H1 (cell line): ENCODE measurements at regions of chr2 and their contacts with region 1.

Region 1: DNA sequence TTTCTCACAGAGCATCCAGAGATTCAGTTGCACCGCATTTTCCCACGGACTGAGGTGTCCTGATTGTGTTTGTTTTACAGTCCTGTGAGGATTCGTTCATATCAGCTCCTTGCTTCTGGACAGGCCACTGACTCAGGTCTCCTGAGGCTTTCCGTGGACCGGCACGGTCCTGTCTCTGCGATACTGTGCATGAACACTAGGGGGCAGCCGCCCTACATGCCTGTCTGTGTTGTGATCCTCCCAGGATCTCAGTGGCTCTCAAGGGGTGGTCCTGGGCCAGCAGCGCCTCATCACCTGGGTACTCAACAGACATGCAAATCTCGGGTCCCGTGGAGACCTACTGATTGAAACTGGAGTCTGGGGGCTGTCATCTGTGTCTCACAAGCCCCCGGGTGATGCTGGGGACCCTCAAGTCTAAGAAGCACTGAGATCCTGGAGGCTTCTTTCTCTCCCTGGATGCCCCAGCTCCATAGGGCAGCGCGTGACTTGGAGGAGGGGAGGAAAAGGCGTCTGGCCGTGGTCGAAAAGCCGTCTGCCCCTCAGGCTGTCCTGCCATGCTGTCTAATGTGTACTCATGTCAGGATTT is 28.9 kb downstream of the IL1R2 start:
- DNase-seq: peak; percentile 64 to 94
- H3K4me3 ChIP-seq: no peak overlapping the region
- H3K27ac ChIP-seq: no peak overlapping the region
- H3K4me1 ChIP-seq: peaks cover 0 to 3% (median 0%) of the 10 kb centered on the region in 4 experiments; a peak in 1 of 7 replicates
- H3K27me3 ChIP-seq: no peaks in the 10 kb centered on the region
- CTCF ChIP-seq: peak; percentile 92 to 98 (median 98)
- EP300 ChIP-seq: no peak
- POLR2A ChIP-seq: no peak
- RAD21 ChIP-seq: peak; percentile 96 to 97

Region 2: GRCh38 chr2:101983928-101984327 is 36.8 kb before region 1 on chr2:
- CTCF ChIA-PET with region 1: no interaction called
- POLR2A ChIA-PET with region 1: no interaction called
- DNase-seq: no peak
- H3K4me3 ChIP-seq: no peak overlapping the region
- H3K27ac ChIP-seq: no peak overlapping the region
- H3K4me1 ChIP-seq: peaks cover 0 to 7% (median 0%) of the 10 kb centered on the region in 4 experiments; a peak in 3 of 7 replicates
- H3K27me3 ChIP-seq: no peaks in the 10 kb centered on the region
- CTCF ChIP-seq: peak in 2 of 3 experiments; percentile 32 to 33; a peak in 2 of 4 replicates
- EP300 ChIP-seq: no peak
- POLR2A ChIP-seq: no peak
- RAD21 ChIP-seq: peak; percentile 46 to 52

Region 3: GRCh38 chr2:101998896-101999789 is 21.5 kb before region 1 on chr2:
- CTCF ChIA-PET with region 1: interaction called, 48 read pairs
- POLR2A ChIA-PET with region 1: no interaction called
- DNase-seq: no peak
- H3K4me3 ChIP-seq: no peak overlapping the region
- H3K27ac ChIP-seq: no peak overlapping the region
- H3K4me1 ChIP-seq: no peaks in the 10 kb centered on the region
- H3K27me3 ChIP-seq: no peaks in the 10 kb centered on the region
- CTCF ChIP-seq: peak in 1 of 3 experiments; percentile 15; a peak in 1 of 4 replicates
- EP300 ChIP-seq: no peak
- POLR2A ChIP-seq: no peak
- RAD21 ChIP-seq: peak in 1 of 2 experiments; percentile 14; a peak in 2 of 4 replicates

Region 4: GRCh38 chr2:102033031-102033749 is 12.5 kb after region 1 on chr2:
- CTCF ChIA-PET with region 1: interaction called, 38 read pairs
- POLR2A ChIA-PET with region 1: no interaction called
- DNase-seq: no peak
- H3K4me3 ChIP-seq: no peak overlapping the region
- H3K27ac ChIP-seq: no peak overlapping the region
- H3K4me1 ChIP-seq: peaks cover 0 to 3% (median 0%) of the 10 kb centered on the region in 4 experiments; a peak in 1 of 7 replicates
- H3K27me3 ChIP-seq: no peaks in the 10 kb centered on the region
- CTCF ChIP-seq: no peak
- EP300 ChIP-seq: no peak
- POLR2A ChIP-seq: no peak
- RAD21 ChIP-seq: no peak

Region 5: GRCh38 chr2:102063487-102063911 is 42.8 kb after region 1 on chr2:
- CTCF ChIA-PET with region 1: interaction called, 11 read pairs
- POLR2A ChIA-PET with region 1: no interaction called
- DNase-seq: no peak
- H3K4me3 ChIP-seq: no peak overlapping the region
- H3K27ac ChIP-seq: no peak overlapping the region
- H3K4me1 ChIP-seq: no peaks in the 10 kb centered on the region
- H3K27me3 ChIP-seq: no peaks in the 10 kb centered on the region
- CTCF ChIP-seq: no peak
- EP300 ChIP-seq: no peak
- POLR2A ChIP-seq: no peak
- RAD21 ChIP-seq: no peak

Region 6: DNA sequence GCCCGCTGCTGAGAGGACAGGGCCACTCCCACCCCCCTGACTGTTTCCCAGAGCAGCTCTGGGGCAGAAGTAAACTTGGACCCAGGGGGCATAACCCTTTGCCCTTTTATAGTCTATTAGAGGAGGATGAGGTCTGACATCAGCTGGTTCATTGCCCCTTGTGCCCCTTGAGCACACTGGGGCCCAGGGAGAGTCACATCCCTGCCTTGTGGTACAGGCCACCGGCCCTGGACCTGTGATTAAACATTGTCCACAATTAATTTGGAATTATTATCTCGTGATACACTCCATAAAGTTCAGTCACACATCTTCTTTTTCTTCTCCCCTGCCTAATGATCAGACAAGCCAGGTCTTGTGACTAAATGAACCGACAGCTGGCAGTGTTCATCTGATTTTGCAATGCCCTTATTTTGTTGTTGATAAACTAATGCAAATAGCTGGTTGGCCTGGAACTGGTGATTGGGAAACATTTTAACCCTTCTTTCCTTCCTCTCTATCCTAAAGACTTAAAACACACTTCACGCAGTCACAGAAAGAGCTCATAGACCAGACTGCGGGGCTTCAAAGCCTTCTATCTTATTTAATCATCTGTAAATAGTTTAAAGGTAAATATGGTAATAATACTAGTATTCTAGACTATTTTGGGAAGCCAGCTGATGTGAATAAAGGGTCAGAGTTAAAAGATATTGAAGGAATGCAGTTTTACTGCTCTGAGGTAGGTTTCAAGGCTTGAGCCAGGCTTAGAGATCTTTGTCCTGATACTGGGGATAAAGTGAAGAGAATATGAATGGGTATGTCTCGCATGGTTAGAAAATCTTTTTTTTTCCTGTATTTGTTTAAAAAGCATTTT is 135.2 kb after region 1 on chr2:
- CTCF ChIA-PET with region 1: interaction called, 14 read pairs
- POLR2A ChIA-PET with region 1: no interaction called
- DNase-seq: no peak
- H3K4me3 ChIP-seq: no peak overlapping the region
- H3K27ac ChIP-seq: no peak overlapping the region
- H3K4me1 ChIP-seq: no peaks in the 10 kb centered on the region
- H3K27me3 ChIP-seq: no peaks in the 10 kb centered on the region
- CTCF ChIP-seq: no peak
- EP300 ChIP-seq: no peak
- POLR2A ChIP-seq: no peak
- RAD21 ChIP-seq: no peak

Region 7: GRCh38 chr2:102235491-102235890 is 214.8 kb after region 1 on chr2:
- CTCF ChIA-PET with region 1: interaction called, 42 read pairs
- POLR2A ChIA-PET with region 1: no interaction called
- DNase-seq: peak in 1 of 2 experiments; percentile 51
- H3K4me3 ChIP-seq: no peak overlapping the region
- H3K27ac ChIP-seq: no peak overlapping the region
- H3K4me1 ChIP-seq: no peaks in the 10 kb centered on the region
- H3K27me3 ChIP-seq: no peaks in the 10 kb centered on the region
- CTCF ChIP-seq: peak; percentile 63 to 74 (median 72)
- EP300 ChIP-seq: no peak
- POLR2A ChIP-seq: no peak
- RAD21 ChIP-seq: peak; percentile 76 to 86